ENCODE measurements at regions of chr15 and their contacts with region 1.

Region 1: DNA sequence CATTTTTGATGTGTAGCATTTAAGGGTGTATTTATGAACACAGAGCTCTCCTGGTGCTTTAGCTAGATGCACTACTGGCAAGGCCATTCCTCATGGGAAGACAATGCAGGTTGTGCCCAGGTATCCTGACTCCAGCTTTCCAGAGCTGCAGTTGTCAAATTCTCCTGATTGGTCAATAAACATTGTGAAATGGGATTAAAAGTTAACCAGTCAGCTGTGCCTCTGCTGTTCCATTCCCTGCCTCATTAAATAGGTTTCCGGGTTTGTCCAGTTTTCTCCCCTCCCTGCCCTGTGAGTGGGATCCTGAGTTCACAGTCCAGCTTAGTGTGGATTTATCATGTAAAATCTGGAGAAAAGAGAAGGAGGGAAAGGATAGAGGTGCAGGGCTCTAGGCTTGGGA is 207.3 kb downstream of the SQOR start:
- DNase-seq: no peak
- H3K4me3 ChIP-seq: no peak overlapping the region
- H3K27ac ChIP-seq: no peak overlapping the region
- H3K4me1 ChIP-seq: peaks cover 2% of the 10 kb centered on the region
- H3K27me3 ChIP-seq: no peaks in the 10 kb centered on the region
- CTCF ChIP-seq: no peak
- POLR2A ChIP-seq: no peak

Region 2: DNA sequence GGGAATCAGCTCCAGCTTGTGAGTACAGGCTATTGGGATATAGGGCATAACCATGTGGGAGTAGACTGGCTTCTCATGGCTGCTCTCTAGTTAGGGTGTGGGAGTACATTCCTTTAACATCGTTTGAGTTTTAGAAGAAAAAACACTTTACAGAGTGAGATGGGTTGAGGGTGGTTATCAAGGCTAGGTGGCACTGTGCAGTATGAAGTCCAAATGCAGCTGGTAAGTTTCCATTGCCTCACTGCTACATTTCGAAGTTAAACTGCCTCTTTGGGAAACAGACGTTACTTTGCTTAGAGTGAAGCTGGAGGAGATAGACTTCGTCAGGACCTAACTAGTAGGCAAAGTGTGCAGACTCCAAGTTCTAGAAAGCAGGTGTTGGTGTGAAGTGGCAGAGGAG is 14.9 kb before region 1 on chr15:
- CTCF ChIA-PET with region 1: no interaction called
- POLR2A ChIA-PET with region 1: no interaction called
- dilution Hi-C with region 1: no loop called
- intact Hi-C with region 1: no loop called
- DNase-seq: peak; percentile 26
- H3K4me3 ChIP-seq: no peak overlapping the region
- H3K27ac ChIP-seq: no peak overlapping the region
- H3K4me1 ChIP-seq: no peaks in the 10 kb centered on the region
- H3K27me3 ChIP-seq: no peaks in the 10 kb centered on the region
- CTCF ChIP-seq: no peak
- POLR2A ChIP-seq: no peak

Region 3: GRCh38 chr15:45871121-45871985 is 29.2 kb after region 1 on chr15:
- CTCF ChIA-PET with region 1: no interaction called
- POLR2A ChIA-PET with region 1: no interaction called
- dilution Hi-C with region 1: no loop called
- intact Hi-C with region 1: no loop called
- DNase-seq: peak; percentile 7
- H3K4me3 ChIP-seq: no peak overlapping the region
- H3K27ac ChIP-seq: no peak overlapping the region
- H3K4me1 ChIP-seq: no peaks in the 10 kb centered on the region
- H3K27me3 ChIP-seq: no peaks in the 10 kb centered on the region
- CTCF ChIP-seq: no peak
- POLR2A ChIP-seq: no peak

Region 4: DNA sequence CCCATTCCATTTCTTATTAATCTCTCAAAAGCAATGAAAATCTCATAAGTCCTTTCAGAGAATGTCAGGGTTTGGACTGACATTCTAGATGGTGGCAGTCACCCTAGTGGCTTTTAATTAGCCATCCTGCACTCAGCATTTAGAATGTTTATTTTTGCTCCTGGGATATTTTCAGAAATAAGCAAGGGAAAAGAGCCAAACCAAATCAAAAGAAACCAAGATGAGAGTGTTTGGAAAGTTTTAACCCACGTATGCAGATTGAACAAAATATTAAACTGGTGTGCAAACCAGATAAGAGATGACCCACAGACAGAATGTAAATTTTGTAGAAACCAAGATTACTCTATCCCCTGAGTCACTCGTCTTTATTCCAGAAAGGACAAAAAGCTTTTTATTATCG is 68.5 kb after region 1 on chr15:
- CTCF ChIA-PET with region 1: no interaction called
- POLR2A ChIA-PET with region 1: no interaction called
- dilution Hi-C with region 1: no loop called
- intact Hi-C with region 1: loop called (anchors 2 kb)
- DNase-seq: no peak
- H3K4me3 ChIP-seq: no peak overlapping the region
- H3K27ac ChIP-seq: no peak overlapping the region
- H3K4me1 ChIP-seq: peaks cover 12% of the 10 kb centered on the region
- H3K27me3 ChIP-seq: no peaks in the 10 kb centered on the region
- CTCF ChIP-seq: no peak
- POLR2A ChIP-seq: no peak

Measured in endothelial cell of umbilical vein (primary cell).